Activated CD4-positive, alpha-beta memory T cell treated with anti-CD3 and anti-CD28 coated beads for 36 hours (primary cell): ENCODE measurements at regions of chr16 and their contacts with region 1.

Region 1: DNA sequence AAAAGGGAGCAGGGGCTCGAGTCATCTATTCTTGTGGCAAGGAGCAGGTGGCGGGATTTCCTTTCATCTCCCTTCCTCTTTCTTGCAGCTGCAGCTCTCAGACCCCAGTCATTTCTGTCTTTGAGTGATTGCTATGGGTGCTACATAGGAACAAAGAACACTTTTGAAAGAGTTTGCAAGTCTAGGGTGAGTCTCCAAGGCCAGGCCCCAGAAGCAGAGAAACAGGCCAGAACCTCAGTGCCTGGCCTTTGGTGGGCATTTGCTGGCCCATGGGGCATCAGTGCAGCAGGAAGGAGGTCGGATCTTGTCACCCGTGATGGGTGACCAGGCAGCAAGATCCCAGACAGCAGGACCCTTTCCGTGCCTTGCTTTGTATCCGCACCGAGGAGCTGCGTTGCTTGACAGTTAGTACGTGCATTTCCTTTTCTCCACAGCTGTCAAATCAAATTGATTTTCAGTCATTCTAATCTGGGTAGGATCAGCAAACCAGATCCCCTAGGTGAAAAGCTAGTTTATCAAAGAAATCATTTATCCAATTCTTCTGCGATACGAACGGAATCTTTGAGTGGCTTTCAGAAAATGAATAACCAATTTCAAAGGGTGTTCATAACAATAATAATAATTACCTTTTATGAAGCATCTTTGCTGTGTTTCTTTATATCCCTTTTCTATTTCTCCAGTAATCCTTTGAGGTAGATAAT is 244.6 kb upstream of the MAF start:
- DNase-seq: peak; percentile 58
- H3K4me3 Mint-ChIP-seq: peak overlapping the region; percentile 45
- H3K27ac Mint-ChIP-seq: peak overlapping the region; percentile 69
- H3K4me1 Mint-ChIP-seq: peaks cover 40% of the 10 kb centered on the region
- H3K27me3 Mint-ChIP-seq: peaks cover 5% of the 10 kb centered on the region

Region 2: DNA sequence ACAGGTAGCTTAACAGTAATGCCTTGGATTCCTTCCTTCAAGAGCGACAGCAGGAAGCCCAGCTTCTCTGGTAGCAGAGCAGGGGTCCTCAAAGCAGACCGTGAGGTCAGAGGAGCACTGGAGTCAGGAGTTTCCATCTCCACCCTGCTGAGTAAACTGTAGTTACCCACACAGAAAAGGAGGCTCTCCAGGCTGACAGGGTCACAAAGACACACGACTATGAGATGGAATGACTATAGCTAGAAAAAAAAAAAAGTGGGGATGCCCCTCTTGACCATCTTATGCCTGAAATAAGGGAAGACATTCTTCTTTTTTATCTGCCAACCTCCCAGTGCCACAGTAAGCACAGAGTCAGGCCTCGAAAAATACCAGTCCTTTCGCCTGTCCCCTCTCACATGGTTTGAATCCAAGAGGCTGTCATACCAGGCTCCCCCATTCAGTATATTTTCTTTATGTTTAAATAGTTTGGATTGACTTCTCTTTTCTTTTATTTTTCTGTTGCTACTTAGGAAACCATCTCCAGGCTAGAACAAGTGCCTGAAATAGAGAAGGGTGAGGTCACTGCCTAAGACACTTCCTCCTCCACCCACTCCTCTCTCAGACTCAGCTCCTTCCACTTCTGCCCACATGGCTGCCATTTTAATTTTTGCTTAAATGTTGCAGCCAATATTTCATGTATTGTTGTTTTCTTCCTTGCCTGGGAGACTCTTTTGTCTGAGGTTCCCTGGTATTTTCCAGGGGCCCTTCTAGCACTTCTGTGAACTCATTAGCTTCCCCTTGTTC is 952.0 kb before region 1 on chr16:
- CTCF ChIA-PET with region 1: no interaction called
- POLR2A ChIA-PET with region 1: no interaction called
- intact Hi-C with region 1: loop called (anchors 10 kb)
- DNase-seq: peak; percentile 65
- H3K4me3 Mint-ChIP-seq: peak overlapping the region; percentile 20
- H3K27ac Mint-ChIP-seq: peak overlapping the region; percentile 96
- H3K4me1 Mint-ChIP-seq: peaks cover 86% of the 10 kb centered on the region
- H3K27me3 Mint-ChIP-seq: no peaks in the 10 kb centered on the region

Region 3: DNA sequence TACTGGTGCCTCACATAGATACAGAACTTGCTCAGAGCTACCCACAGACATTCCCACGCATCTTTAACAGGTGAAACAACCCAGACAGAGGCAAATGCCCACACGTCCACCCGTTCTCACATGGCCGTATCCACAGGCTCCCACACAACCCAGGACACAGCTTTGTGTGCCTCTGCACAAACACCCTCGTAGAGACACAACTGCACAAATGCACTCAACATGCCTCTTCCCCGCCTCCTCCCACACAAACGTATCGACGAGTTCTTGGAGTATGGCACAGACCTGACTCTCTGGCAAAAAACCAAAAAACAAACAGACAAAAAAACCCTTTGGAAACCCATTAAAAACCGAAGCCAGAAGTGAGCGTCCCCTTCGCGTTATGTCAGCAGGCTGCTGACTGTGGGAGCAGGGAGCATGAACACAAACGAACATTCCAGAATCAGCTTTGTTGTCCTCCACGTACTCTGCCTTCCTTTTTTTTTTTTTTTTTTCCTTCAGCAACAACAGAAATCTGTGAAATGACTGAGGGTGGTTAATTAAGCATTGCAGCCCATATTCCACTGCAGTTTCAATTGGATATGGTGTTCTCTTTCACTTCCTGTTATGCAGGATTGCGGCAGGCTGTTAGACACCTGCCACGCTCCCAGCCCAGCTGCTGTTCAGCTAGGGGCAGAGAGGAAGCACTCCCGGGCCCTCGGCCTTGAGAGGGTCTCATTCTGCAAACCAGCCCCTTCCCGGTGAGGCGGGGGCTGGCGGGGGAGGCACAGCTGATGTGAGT is 558.3 kb before region 1 on chr16:
- CTCF ChIA-PET with region 1: no interaction called
- POLR2A ChIA-PET with region 1: no interaction called
- intact Hi-C with region 1: loop called (anchors 10 kb)
- DNase-seq: peak; percentile 69
- H3K4me3 Mint-ChIP-seq: peak overlapping the region; percentile 55
- H3K27ac Mint-ChIP-seq: peak overlapping the region; percentile 73
- H3K4me1 Mint-ChIP-seq: peaks cover 61% of the 10 kb centered on the region
- H3K27me3 Mint-ChIP-seq: no peaks in the 10 kb centered on the region

Region 4: DNA sequence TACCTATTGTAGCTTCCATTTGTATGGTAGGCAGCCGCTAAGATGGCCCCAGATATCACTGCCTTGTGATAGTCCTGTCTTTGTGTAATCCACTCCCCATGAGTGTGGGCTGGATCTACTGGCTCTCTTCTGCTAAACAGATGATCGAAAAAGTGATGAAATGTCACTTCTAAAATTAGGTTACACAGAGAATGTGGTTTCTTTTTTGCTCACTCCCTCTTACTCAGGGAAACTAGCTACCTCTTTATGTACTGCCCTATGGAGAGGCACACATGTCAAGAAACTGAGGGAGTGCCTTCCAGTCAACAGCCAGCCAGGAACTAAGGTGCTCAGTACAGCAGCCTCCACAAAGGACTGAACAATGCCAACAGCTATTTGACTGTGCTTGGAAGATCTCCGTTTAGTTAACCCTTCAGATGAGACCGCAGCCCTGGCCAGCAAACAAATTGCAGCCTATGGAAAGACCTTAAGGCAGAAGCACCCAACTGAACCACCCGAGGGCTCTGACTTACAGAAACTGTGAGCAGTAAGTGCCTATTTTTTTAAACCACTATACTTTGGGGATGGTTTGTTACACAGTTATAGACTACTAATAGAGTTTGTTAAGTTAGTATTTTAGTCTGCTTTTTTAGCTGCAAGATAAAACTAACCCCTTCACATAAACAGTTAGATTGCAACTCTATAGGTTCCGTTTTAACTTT is 131.4 kb before region 1 on chr16:
- CTCF ChIA-PET with region 1: interaction called, 3 read pairs
- POLR2A ChIA-PET with region 1: no interaction called
- intact Hi-C with region 1: loop called (anchors 1 kb)
- DNase-seq: peak; percentile 43
- H3K4me3 Mint-ChIP-seq: peak overlapping the region; percentile 54
- H3K27ac Mint-ChIP-seq: peak overlapping the region; percentile 61
- H3K4me1 Mint-ChIP-seq: peaks cover 25% of the 10 kb centered on the region
- H3K27me3 Mint-ChIP-seq: peaks cover 4% of the 10 kb centered on the region

Region 5: GRCh38 chr16:79758615-79759341 is 86.4 kb before region 1 on chr16:
- CTCF ChIA-PET with region 1: no interaction called
- POLR2A ChIA-PET with region 1: no interaction called
- intact Hi-C with region 1: loop called (anchors 1 kb)
- DNase-seq: no peak
- H3K4me3 Mint-ChIP-seq: no peak overlapping the region
- H3K27ac Mint-ChIP-seq: no peak overlapping the region
- H3K4me1 Mint-ChIP-seq: peaks cover 37% of the 10 kb centered on the region
- H3K27me3 Mint-ChIP-seq: peaks cover 4% of the 10 kb centered on the region

Region 6: DNA sequence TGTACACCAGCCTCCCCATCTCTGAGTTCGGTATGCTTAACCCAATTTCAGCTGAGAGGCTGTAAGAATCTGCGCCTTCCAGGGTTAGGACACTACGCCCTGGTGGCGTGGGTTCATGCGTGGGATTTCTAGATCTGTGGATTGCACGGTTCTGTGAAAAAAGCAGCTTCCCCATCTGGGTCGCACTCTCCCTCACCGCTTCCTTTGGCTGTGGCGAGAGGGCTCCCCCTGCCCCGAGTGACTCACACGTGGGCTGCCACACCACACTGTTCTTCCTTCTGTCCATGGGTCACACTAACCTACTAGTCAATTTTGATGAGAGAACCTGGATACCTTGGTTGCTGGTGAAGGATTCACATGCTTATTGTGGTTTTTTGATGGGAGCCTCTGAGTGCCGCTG is 11.4 kb after region 1 on chr16:
- CTCF ChIA-PET with region 1: no interaction called
- POLR2A ChIA-PET with region 1: no interaction called
- intact Hi-C with region 1: no loop called
- DNase-seq: peak; percentile 18
- H3K4me3 Mint-ChIP-seq: no peak overlapping the region
- H3K27ac Mint-ChIP-seq: no peak overlapping the region
- H3K4me1 Mint-ChIP-seq: peaks cover 3% of the 10 kb centered on the region
- H3K27me3 Mint-ChIP-seq: peaks cover 31% of the 10 kb centered on the region

Region 7: DNA sequence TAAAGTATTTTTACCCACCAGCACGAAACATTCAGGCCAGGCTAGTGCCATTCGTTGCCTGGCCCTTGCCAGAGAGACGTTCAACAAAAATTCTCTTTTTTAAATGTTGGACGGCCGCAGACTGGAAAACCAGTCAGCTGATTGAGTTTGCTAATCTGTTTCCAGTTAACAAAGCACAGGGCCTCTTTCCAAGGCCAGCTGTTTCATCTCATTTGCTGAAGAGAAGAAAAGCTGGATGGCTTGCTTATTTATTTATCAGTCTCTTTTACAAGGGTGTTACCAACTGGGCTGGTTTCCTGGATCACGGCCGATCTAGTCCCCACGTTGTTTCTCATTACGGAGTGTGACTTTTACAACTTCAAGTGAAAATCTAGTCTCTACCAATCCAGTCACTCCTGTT is 276.9 kb after region 1 on chr16:
- CTCF ChIA-PET with region 1: no interaction called
- POLR2A ChIA-PET with region 1: no interaction called
- intact Hi-C with region 1: no loop called
- DNase-seq: no peak
- H3K4me3 Mint-ChIP-seq: no peak overlapping the region
- H3K27ac Mint-ChIP-seq: no peak overlapping the region
- H3K4me1 Mint-ChIP-seq: no peaks in the 10 kb centered on the region
- H3K27me3 Mint-ChIP-seq: peaks cover 15% of the 10 kb centered on the region

Region 8: DNA sequence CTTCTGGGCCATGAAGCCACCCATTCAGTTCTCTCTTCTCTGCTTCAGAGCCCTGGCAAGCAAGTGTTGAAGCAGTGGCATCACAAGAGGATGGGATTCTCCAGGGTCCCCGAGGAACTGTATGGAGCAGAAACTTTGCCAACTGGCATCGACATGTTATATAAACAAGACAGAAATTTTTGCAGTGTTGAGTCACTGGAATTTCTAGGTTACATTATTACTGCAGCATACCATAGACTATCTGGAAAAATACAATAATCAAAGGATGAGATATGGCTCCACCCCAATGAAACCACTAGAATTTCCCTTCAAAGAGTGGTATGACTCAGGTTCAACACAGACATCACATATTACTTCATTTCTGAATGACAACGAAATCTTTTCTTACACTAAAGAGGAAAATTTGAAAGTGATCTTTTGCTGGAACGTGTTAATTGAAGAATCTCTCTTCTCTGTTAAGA is 352.6 kb after region 1 on chr16:
- CTCF ChIA-PET with region 1: no interaction called
- POLR2A ChIA-PET with region 1: no interaction called
- intact Hi-C with region 1: loop called (anchors 1 kb)
- DNase-seq: peak; percentile 10
- H3K4me3 Mint-ChIP-seq: no peak overlapping the region
- H3K27ac Mint-ChIP-seq: peak overlapping the region; percentile 42
- H3K4me1 Mint-ChIP-seq: peaks cover 7% of the 10 kb centered on the region
- H3K27me3 Mint-ChIP-seq: peaks cover 27% of the 10 kb centered on the region